CD8-positive, alpha-beta T cell (primary cell): ENCODE measurements at regions of chr15 and their contacts with region 1.

Region 1: GRCh38 chr15:90219421-90220166 is 14.1 kb downstream of the CIB1 start:
- DNase-seq: peak; percentile 38 to 75 (median 65)
- ATAC-seq: peak; percentile 98
- H3K4me3 ChIP-seq: no peak overlapping the region
- H3K4me3 Mint-ChIP-seq: no peak overlapping the region
- H3K27ac ChIP-seq: no peak overlapping the region
- H3K27ac Mint-ChIP-seq: no peak overlapping the region
- H3K4me1 ChIP-seq: peaks cover 7% of the 10 kb centered on the region
- H3K4me1 Mint-ChIP-seq: peaks cover 9% of the 10 kb centered on the region
- H3K27me3 ChIP-seq: no peaks in the 10 kb centered on the region
- H3K27me3 Mint-ChIP-seq: no peaks in the 10 kb centered on the region
- CTCF ChIP-seq: peak; percentile 68

Region 2: GRCh38 chr15:90143166-90143655 is 76.4 kb before region 1 on chr15:
- CTCF ChIA-PET with region 1: interaction called, 13 read pairs
- POLR2A ChIA-PET with region 1: no interaction called
- intact Hi-C with region 1: loop called in 1 of 2 experiments (anchors 1 kb)
- DNase-seq: peak; percentile 25 to 73 (median 62)
- ATAC-seq: peak; percentile 66
- H3K4me3 ChIP-seq: peak overlapping the region in 1 of 2 experiments; percentile 0
- H3K4me3 Mint-ChIP-seq: peak overlapping the region; percentile 61
- H3K27ac ChIP-seq: no peak overlapping the region
- H3K27ac Mint-ChIP-seq: no peak overlapping the region
- H3K4me1 ChIP-seq: peaks cover 16% of the 10 kb centered on the region
- H3K4me1 Mint-ChIP-seq: peaks cover 24% of the 10 kb centered on the region
- H3K27me3 ChIP-seq: no peaks in the 10 kb centered on the region
- H3K27me3 Mint-ChIP-seq: no peaks in the 10 kb centered on the region
- CTCF ChIP-seq: peak; percentile 70

Region 3: DNA sequence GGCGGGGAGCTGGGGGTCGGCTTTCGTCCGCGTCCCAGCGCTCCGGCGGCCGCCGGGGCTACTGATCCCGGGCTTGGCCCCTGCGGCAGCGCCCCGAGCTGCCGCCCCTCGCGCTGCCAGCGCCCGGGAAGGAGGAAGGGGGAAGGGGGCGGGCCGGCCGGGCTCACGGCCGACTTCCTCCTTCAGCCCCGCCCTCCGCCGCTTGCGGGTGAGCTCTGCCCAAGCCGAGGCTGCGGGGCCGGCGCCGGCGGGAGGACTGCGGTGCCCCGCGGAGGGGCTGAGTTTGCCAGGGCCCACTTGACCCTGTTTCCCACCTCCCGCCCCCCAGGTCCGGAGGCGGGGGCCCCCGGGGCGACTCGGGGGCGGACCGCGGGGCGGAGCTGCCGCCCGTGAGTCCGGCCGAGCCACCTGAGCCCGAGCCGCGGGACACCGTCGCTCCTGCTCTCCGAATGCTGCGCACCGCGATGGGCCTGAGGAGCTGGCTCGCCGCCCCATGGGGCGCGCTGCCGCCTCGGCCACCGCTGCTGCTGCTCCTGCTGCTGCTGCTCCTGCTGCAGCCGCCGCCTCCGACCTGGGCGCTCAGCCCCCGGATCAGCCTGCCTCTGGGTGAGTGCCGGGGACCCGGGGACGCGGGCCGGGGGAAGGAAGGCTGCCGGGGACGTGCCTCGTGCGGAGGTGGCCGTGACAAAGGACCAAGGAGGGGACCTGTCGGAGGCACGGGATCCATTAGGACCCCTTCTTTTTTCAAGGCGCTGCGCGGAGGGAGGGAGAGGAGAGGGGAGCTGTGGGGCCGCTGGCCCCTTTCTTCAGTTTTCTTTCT is 18.3 kb before region 1 on chr15 and contains the start of gene SEMA4B:
- CTCF ChIA-PET with region 1: interaction called, 5 read pairs
- POLR2A ChIA-PET with region 1: interaction called, 4 read pairs
- intact Hi-C with region 1: loop called in 1 of 2 experiments (anchors 1 kb)
- DNase-seq: peak; percentile 37 to 86 (median 74)
- ATAC-seq: peak; percentile 91
- H3K4me3 ChIP-seq: peak within 1 kb of the TSS; percentile 69 to 79
- H3K4me3 Mint-ChIP-seq: peak within 1 kb of the TSS; percentile 88
- H3K27ac ChIP-seq: peak within 1 kb of the TSS; percentile 56 to 60
- H3K27ac Mint-ChIP-seq: peak within 1 kb of the TSS; percentile 82
- H3K4me1 ChIP-seq: peaks cover 21% of the 10 kb centered on the region
- H3K4me1 Mint-ChIP-seq: peaks cover 22% of the 10 kb centered on the region
- H3K27me3 ChIP-seq: no peaks in the 10 kb centered on the region
- H3K27me3 Mint-ChIP-seq: no peaks in the 10 kb centered on the region
- CTCF ChIP-seq: no peak
- total RNA-seq, gene SEMA4B: 7.5 to 12.3 TPM

Region 4: GRCh38 chr15:90286678-90287077 is 67.1 kb after region 1 on chr15:
- CTCF ChIA-PET with region 1: interaction called, 15 read pairs
- POLR2A ChIA-PET with region 1: no interaction called
- intact Hi-C with region 1: loop called (anchors 1 to 2 kb)
- DNase-seq: peak in 6 of 9 experiments; percentile 24 to 77 (median 55)
- ATAC-seq: peak; percentile 94
- H3K4me3 ChIP-seq: no peak overlapping the region
- H3K4me3 Mint-ChIP-seq: no peak overlapping the region
- H3K27ac ChIP-seq: no peak overlapping the region
- H3K27ac Mint-ChIP-seq: no peak overlapping the region
- H3K4me1 ChIP-seq: no peaks in the 10 kb centered on the region
- H3K4me1 Mint-ChIP-seq: no peaks in the 10 kb centered on the region
- H3K27me3 ChIP-seq: no peaks in the 10 kb centered on the region
- H3K27me3 Mint-ChIP-seq: no peaks in the 10 kb centered on the region
- CTCF ChIP-seq: peak; percentile 78

Region 5: GRCh38 chr15:90336705-90337141 is 117.1 kb after region 1 on chr15:
- CTCF ChIA-PET with region 1: no interaction called
- POLR2A ChIA-PET with region 1: no interaction called
- intact Hi-C with region 1: no loop called
- DNase-seq: peak in 2 of 9 experiments; percentile 32 to 37
- ATAC-seq: peak; percentile 67
- H3K4me3 ChIP-seq: no peak overlapping the region
- H3K4me3 Mint-ChIP-seq: no peak overlapping the region
- H3K27ac ChIP-seq: no peak overlapping the region
- H3K27ac Mint-ChIP-seq: no peak overlapping the region
- H3K4me1 ChIP-seq: peaks cover 13% of the 10 kb centered on the region
- H3K4me1 Mint-ChIP-seq: peaks cover 9% of the 10 kb centered on the region
- H3K27me3 ChIP-seq: no peaks in the 10 kb centered on the region
- H3K27me3 Mint-ChIP-seq: no peaks in the 10 kb centered on the region
- CTCF ChIP-seq: no peak

Region 6: GRCh38 chr15:90497912-90498311 is 278.3 kb after region 1 on chr15:
- CTCF ChIA-PET with region 1: no interaction called
- POLR2A ChIA-PET with region 1: no interaction called
- intact Hi-C with region 1: no loop called
- DNase-seq: no peak
- ATAC-seq: no peak
- H3K4me3 ChIP-seq: no peak overlapping the region
- H3K4me3 Mint-ChIP-seq: no peak overlapping the region
- H3K27ac ChIP-seq: no peak overlapping the region
- H3K27ac Mint-ChIP-seq: no peak overlapping the region
- H3K4me1 ChIP-seq: peaks cover 16% of the 10 kb centered on the region
- H3K4me1 Mint-ChIP-seq: peaks cover 15% of the 10 kb centered on the region
- H3K27me3 ChIP-seq: no peaks in the 10 kb centered on the region
- H3K27me3 Mint-ChIP-seq: no peaks in the 10 kb centered on the region
- CTCF ChIP-seq: no peak